ENCODE measurements at regions of chr19 and their contacts with region 1.

Region 1: GRCh38 chr19:57279418-57280066 is 743 bp upstream of the ZNF460 start:
- DNase-seq: peak; percentile 93
- H3K4me3 Mint-ChIP-seq: no peak overlapping the region
- H3K27ac Mint-ChIP-seq: no peak overlapping the region
- H3K4me1 Mint-ChIP-seq: peaks cover 31% of the 10 kb centered on the region
- H3K27me3 Mint-ChIP-seq: no peaks in the 10 kb centered on the region

Region 2: DNA sequence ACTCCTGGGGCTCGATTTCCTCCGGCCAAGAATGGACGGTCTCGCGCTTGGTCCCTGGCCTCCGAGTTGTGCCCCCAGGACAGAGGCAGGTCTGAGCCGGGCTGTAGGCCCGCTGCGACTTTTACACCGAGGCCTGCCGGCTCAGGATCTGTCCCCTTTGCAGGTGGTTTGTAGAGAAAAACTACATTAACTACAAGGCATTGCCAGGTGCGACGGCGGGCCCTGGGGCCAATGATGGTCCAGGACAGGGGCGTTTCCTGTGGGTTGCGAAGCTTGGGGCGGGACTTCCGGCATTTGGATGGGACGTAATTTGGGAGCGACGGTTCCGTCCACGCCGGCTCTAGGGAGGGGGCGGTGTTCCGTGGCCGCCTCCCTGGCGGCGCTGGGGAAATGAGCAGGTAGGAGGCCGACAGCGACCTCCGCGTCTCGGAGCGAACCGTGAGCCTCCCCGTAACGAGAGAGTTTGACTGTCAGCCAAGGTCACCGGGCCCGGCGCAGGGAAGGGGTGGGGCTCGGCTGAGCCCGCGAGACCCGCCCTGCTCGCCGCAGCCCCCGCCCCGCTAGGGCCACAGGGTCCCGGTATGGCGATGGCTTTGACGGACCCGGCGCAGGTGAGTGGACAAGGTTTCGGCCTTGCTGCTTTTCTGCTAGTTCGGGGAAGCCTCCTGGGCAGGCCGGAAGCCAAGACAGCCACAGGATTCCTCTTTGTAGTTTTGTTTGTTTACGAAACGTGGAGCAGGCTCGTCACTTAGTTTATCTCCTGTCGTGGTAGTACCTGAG is 39.0 kb before region 1 on chr19 and contains the start of gene ZNF805:
- CTCF ChIA-PET with region 1: no interaction called
- intact Hi-C with region 1: loop called (anchors 1 kb)
- DNase-seq: peak; percentile 95
- H3K4me3 Mint-ChIP-seq: peak within 1 kb of the TSS; percentile 74
- H3K27ac Mint-ChIP-seq: peak within 1 kb of the TSS; percentile 70
- H3K4me1 Mint-ChIP-seq: peaks cover 22% of the 10 kb centered on the region
- H3K27me3 Mint-ChIP-seq: no peaks in the 10 kb centered on the region
- total RNA-seq, gene ZNF805: 6.0 to 6.5 TPM

Region 3: GRCh38 chr19:57290970-57291369 is 11.4 kb after region 1 on chr19:
- CTCF ChIA-PET with region 1: no interaction called
- intact Hi-C with region 1: no loop called
- DNase-seq: no peak
- H3K4me3 Mint-ChIP-seq: no peak overlapping the region
- H3K27ac Mint-ChIP-seq: no peak overlapping the region
- H3K4me1 Mint-ChIP-seq: peaks cover 7% of the 10 kb centered on the region
- H3K27me3 Mint-ChIP-seq: no peaks in the 10 kb centered on the region

Region 4: DNA sequence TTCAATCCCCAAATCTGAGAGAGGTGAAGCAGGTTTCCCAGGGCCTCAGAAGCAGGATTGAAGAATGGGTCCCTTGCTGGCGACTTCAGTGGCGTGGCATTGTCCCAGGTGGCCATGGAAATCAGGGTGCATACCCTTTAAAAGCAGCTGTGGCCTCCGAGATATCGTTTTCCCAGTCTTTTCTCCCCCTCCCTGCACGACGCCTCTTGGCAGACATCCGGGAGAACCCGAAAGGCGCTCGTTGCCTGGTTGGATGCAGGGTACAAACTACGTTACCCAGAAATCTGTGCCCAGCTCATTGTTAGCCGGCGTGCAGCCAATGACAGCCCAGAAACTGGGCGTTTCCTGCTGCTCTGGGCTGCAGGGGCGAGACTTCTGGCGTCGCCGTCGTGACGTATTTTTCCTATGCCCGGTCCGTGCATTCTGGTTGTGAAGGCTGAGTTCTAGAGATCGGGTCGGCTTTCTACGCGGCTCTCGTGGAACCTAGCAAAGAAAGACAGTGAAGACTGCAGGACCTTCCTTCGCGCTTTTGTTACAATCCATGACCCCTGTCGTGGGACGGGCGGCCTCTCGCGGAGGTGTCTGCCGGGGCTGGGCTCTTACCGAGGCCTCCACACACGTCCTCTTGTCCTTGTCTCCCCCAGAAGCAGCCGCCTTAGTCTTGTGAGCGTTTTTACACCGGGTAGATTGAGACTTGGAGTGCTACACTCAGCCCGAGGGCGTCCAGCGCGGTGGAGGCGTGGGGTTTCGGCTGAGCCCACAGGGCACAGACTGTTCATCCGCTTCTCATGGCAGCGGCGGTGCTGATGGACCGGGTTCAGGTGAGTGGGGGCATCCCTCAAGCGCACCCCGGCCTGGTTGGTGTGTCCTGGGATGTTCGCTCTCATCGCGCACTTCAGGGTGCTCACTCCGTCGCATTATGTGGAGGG is 71.6 kb after region 1 on chr19 and contains the start of gene ZNF304:
- CTCF ChIA-PET with region 1: no interaction called
- intact Hi-C with region 1: loop called (anchors 1 kb)
- DNase-seq: peak; percentile 89
- H3K4me3 Mint-ChIP-seq: peak within 1 kb of the TSS; percentile 88
- H3K27ac Mint-ChIP-seq: peak within 1 kb of the TSS; percentile 72
- H3K4me1 Mint-ChIP-seq: peaks cover 25% of the 10 kb centered on the region
- H3K27me3 Mint-ChIP-seq: no peaks in the 10 kb centered on the region
- total RNA-seq, gene ZNF304: 3.3 to 3.6 TPM

Region 5: GRCh38 chr19:57389730-57390598 is 110.4 kb after region 1 on chr19 and contains the start of gene ZNF548:
- CTCF ChIA-PET with region 1: no interaction called
- intact Hi-C with region 1: loop called (anchors 1 kb)
- DNase-seq: peak; percentile 94
- H3K4me3 Mint-ChIP-seq: peak within 1 kb of the TSS; percentile 88
- H3K27ac Mint-ChIP-seq: peak within 1 kb of the TSS; percentile 87
- H3K4me1 Mint-ChIP-seq: peaks cover 20% of the 10 kb centered on the region
- H3K27me3 Mint-ChIP-seq: no peaks in the 10 kb centered on the region
- total RNA-seq, gene ZNF548: 11.9 to 13.3 TPM

Region 6: DNA sequence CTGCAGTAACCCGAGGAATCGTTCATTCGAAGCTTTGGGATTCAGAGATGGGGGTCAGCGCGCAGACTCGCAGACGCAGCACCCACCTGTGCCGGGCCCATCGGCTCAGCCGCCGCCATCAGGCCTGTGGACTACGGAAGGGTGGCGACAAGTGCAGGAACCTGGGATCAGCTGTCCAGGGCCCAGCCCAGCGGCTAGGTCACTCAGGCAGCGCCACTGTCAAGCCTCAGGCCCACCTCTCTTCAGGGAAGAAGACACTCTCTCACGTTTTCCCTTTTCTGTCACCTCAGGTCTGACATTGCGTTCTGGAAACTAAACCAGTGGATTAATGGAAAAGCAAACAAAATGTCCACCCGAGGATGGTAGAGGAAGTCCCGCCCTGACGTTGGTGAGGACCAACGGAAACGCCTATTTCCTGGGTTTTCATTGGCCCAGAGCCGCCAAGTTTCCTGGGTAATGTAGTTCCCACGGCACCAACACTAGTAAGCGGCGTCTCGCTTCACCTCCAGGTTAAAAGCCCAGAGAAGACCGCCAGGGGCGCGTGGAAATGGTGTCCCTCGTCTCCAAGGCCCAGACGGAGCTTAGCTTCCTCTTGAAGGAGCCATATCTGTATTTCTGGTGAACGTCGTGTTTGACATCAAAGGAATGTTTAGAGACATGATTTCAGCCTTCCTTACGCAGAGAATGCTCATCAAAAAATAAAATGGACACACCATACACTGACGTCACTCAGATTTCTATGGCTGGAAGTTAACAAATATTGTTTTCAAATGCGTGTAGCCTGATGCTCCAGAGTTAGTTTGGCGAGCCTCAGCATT is 197.9 kb after region 1 on chr19 and contains the start of gene ZNF772:
- CTCF ChIA-PET with region 1: no interaction called
- intact Hi-C with region 1: loop called (anchors 1 kb)
- DNase-seq: peak; percentile 93
- H3K4me3 Mint-ChIP-seq: peak within 1 kb of the TSS; percentile 83
- H3K27ac Mint-ChIP-seq: peak within 1 kb of the TSS; percentile 82
- H3K4me1 Mint-ChIP-seq: peaks cover 21% of the 10 kb centered on the region
- H3K27me3 Mint-ChIP-seq: no peaks in the 10 kb centered on the region
- total RNA-seq, gene ZNF772: 6.0 to 8.3 TPM

Region 7: DNA sequence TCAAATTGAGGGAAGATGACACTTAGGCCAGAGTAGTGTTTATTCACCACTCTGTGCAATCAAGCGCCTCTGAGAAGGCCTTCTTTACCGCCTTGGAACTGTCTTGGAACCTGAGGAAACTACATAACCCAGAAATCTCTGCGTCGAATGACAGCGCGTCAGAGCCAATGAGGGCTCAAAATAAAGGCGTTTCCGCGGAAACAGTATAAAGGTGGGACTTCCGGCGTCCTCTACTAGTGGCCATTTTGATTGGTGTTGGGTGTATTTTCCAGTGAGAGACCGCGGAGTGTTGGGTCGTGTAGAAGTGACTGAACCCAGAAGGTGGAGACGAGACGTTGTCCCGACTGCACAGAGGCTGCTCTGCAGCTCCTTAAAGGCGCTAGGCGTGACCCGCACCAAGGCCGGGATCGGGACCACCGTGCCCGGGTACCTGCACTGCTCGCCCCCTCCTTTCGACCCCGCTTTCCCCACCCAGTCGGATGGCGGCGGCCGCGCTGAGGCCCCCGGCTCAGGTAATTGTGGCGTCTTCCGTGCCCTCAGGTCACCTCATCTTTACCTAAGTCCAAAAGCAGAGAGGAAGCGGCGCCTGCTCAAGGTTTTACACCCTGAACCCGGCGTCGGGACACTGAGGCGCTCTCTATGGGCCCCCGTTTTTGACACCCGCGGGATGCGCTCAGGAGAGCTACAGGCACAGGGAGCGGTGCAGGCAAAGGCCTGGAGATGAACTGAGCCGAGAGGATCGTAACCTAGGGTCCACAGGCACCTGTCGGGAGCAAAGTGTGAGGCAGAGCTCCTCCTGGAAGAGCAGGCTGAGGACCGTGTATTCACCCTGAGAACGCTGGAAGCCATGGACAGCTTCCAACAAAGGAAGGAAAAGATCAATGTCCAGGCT is 467.3 kb after region 1 on chr19 and contains the start of gene ZNF776:
- CTCF ChIA-PET with region 1: no interaction called
- intact Hi-C with region 1: loop called (anchors 5 kb)
- DNase-seq: peak; percentile 90
- H3K4me3 Mint-ChIP-seq: peak within 1 kb of the TSS; percentile 99
- H3K27ac Mint-ChIP-seq: peak within 1 kb of the TSS; percentile 90
- H3K4me1 Mint-ChIP-seq: peaks cover 17% of the 10 kb centered on the region
- H3K27me3 Mint-ChIP-seq: no peaks in the 10 kb centered on the region
- total RNA-seq, gene ZNF776: 9.4 to 10.3 TPM